PC-9 (cell line): ENCODE measurements at regions of chr6 and their contacts with region 1.

Region 1: DNA sequence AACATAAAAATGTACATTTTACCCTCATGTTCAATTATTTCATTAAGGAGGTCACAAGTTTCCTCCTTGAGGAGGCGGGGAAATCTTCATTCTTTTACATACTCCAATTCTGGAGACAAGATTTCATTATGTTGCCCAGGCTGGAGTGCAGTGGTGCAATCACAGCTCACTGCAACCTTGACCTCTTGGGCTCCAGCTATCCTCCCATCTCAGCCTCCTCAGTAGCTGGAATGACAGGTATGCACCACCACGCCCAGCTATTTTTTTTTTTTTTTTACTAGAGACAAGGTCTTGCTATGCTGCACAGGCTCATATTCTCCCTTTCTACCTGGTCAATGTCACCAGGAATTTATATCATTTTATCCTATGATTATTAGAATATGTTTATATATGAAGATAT is 85.8 kb downstream of the FUT9 start:
- DNase-seq: peak in 1 of 2 experiments; percentile 11
- H3K4me3 ChIP-seq: no peak overlapping the region
- H3K27ac ChIP-seq: no peak overlapping the region
- H3K4me1 ChIP-seq: peaks cover 31% of the 10 kb centered on the region
- H3K27me3 ChIP-seq: no peaks in the 10 kb centered on the region
- CTCF ChIP-seq: no peak

Region 2: DNA sequence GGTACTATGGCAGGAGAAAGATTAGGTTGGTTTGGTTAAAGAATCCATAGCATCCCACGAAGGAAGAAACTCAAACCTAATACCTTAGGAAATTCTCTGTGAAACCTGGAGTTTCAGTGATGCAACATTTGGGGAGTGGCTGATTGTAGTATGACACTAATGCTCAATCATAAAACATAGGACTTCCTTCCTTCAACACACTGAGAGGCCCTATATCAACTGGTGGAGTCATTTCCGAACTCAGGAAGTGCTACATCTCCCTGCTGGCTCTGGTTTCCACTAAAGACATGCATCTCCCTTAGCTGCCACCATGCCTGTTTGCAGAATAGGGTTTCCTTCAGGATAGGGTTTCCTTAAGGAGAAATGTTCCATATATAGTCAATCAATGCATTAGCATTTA is 529.5 kb before region 1 on chr6:
- CTCF ChIA-PET with region 1: no interaction called
- POLR2A ChIA-PET with region 1: no interaction called
- intact Hi-C with region 1: no loop called
- DNase-seq: no peak
- H3K4me3 ChIP-seq: no peak overlapping the region
- H3K27ac ChIP-seq: no peak overlapping the region
- H3K4me1 ChIP-seq: peaks cover 19% of the 10 kb centered on the region
- H3K27me3 ChIP-seq: no peaks in the 10 kb centered on the region
- CTCF ChIP-seq: no peak

Region 3: DNA sequence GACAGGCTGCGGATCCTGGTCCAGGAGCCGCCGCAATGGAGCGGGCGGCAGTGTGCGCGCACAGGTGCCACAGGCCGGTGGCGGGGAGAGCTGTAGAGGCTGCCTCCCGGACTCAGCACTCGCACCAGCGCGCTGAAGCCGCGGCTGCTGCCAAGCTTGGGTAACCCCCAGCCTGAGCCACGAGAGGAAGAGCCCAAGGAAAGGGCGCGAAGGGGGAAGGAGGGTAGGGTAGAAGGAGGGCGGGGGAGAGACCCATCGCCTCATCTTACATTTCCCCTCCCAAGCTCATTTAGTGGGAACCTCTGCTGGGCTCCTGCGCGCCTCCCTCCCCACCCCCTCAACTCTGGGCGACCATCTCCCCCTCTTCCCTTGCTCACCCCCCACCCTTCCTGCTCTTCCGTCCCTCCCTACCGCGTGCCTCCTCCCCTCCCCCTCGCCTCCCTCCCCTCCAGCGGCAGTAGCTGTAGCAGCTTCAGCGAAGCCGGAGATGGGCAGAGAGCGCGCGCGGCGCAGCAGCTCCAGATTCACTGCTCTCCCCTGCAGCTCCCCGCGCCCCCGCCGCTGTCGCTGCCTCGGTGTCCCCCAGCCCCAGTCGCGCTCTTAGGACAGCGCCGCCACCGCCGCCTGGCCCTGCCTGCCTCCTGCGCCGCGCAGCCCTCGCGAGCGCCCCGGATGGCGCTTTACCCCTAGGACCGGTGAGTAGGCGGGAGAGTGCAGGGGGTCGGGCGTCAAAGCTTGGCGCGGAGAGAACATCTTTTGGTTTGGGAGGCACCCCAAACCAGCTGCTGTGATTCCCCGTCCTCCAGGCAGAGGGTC is 85.8 kb before region 1 on chr6 and contains the start of gene FUT9:
- CTCF ChIA-PET with region 1: no interaction called
- POLR2A ChIA-PET with region 1: no interaction called
- intact Hi-C with region 1: loop called (anchors 2 kb)
- DNase-seq: peak; percentile 72 to 81
- H3K4me3 ChIP-seq: peak within 1 kb of the TSS; percentile 80
- H3K27ac ChIP-seq: peak within 1 kb of the TSS; percentile 31
- H3K4me1 ChIP-seq: peaks cover 32% of the 10 kb centered on the region
- H3K27me3 ChIP-seq: no peaks in the 10 kb centered on the region
- CTCF ChIP-seq: peak; percentile 48; the same call in 1 of the 2 replicates
- total RNA-seq, gene FUT9: 5.2 and 6.9 TPM in 2 replicates

Region 4: DNA sequence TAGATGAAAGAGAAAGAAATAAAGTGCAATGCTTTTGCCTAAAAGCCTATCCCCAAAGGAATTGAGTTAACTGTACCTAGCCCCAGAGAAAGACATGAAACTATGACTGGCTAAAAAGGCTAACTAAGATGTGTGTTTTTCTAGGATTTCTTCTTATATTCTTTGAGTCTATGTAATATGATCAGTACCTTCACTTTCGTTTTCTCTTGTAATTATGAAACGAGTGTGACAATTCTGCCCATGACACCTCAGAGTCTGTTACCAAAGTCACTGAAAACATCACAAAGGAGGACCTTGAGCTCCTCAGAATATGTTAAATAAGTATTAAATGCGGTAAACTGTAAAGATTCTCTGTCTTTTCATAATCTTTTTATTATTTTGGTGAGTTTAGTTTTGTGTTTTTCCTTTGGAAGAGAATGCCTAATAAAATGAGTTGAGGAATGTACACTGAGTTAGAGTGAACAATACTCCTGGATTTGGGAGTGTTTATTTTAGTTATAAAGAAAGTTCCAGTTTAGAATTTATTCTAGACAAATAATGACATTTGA is 55.5 kb after region 1 on chr6:
- CTCF ChIA-PET with region 1: no interaction called
- POLR2A ChIA-PET with region 1: no interaction called
- intact Hi-C with region 1: loop called (anchors 2 kb)
- DNase-seq: no peak
- H3K4me3 ChIP-seq: no peak overlapping the region
- H3K27ac ChIP-seq: no peak overlapping the region
- H3K4me1 ChIP-seq: no peaks in the 10 kb centered on the region
- H3K27me3 ChIP-seq: no peaks in the 10 kb centered on the region
- CTCF ChIP-seq: no peak

Region 5: GRCh38 chr6:96554559-96554958 is 453.0 kb after region 1 on chr6:
- CTCF ChIA-PET with region 1: no interaction called
- POLR2A ChIA-PET with region 1: no interaction called
- intact Hi-C with region 1: no loop called
- DNase-seq: no peak
- H3K4me3 ChIP-seq: no peak overlapping the region
- H3K27ac ChIP-seq: no peak overlapping the region
- H3K4me1 ChIP-seq: no peaks in the 10 kb centered on the region
- H3K27me3 ChIP-seq: no peaks in the 10 kb centered on the region
- CTCF ChIP-seq: no peak